ENCODE measurements at regions of chr13 and their contacts with region 1.

Region 1: GRCh38 chr13:113816946-113817859 is 46.7 kb downstream of the GAS6 start:
- DNase-seq: peak; percentile 77 to 93 (median 86)
- ATAC-seq: peak; percentile 94
- H3K4me3 ChIP-seq: no peak overlapping the region
- H3K4me3 Mint-ChIP-seq: peak overlapping the region; percentile 87
- H3K27ac ChIP-seq: no peak overlapping the region
- H3K27ac Mint-ChIP-seq: peak overlapping the region; percentile 61
- H3K4me1 ChIP-seq: peaks cover 17% of the 10 kb centered on the region
- H3K4me1 Mint-ChIP-seq: peaks cover 23% of the 10 kb centered on the region
- H3K27me3 ChIP-seq: no peaks in the 10 kb centered on the region
- H3K27me3 Mint-ChIP-seq: no peaks in the 10 kb centered on the region
- CTCF ChIP-seq: peak; percentile 77

Region 2: GRCh38 chr13:113904411-113904810 is 87.2 kb after region 1 on chr13:
- CTCF ChIA-PET with region 1: no interaction called
- POLR2A ChIA-PET with region 1: no interaction called
- intact Hi-C with region 1: loop called in 1 of 2 experiments (anchors 5 kb)
- DNase-seq: peak in 10 of 14 experiments; percentile 13 to 64 (median 21)
- ATAC-seq: no peak
- H3K4me3 ChIP-seq: no peak overlapping the region
- H3K4me3 Mint-ChIP-seq: no peak overlapping the region
- H3K27ac ChIP-seq: no peak overlapping the region
- H3K27ac Mint-ChIP-seq: no peak overlapping the region
- H3K4me1 ChIP-seq: peaks cover 6% of the 10 kb centered on the region
- H3K4me1 Mint-ChIP-seq: peaks cover 13% of the 10 kb centered on the region
- H3K27me3 ChIP-seq: peaks cover 0 to 2% of the 10 kb centered on the region in 2 experiments
- H3K27me3 Mint-ChIP-seq: peaks cover 28% of the 10 kb centered on the region
- CTCF ChIP-seq: no peak